ENCODE measurements at regions of chr12 and their contacts with region 1.

Region 1: GRCh38 chr12:56759263-56759908 is 3.7 kb upstream of the HSD17B6 start:
- DNase-seq: no peak
- H3K4me3 ChIP-seq: no peak overlapping the region
- H3K27ac ChIP-seq: no peak overlapping the region
- H3K4me1 ChIP-seq: no peaks in the 10 kb centered on the region
- H3K27me3 ChIP-seq: no peaks in the 10 kb centered on the region
- CTCF ChIP-seq: no peak

Region 2: GRCh38 chr12:56158029-56158925 is 601.1 kb before region 1 on chr12 and contains the start of gene MYL6:
- intact Hi-C with region 1: no loop called
- DNase-seq: peak; percentile 98
- H3K4me3 ChIP-seq: peak within 1 kb of the TSS; percentile 76
- H3K27ac ChIP-seq: peak within 1 kb of the TSS; percentile 96
- H3K4me1 ChIP-seq: peaks cover 8% of the 10 kb centered on the region
- H3K27me3 ChIP-seq: no peaks in the 10 kb centered on the region
- CTCF ChIP-seq: no peak
- total RNA-seq, gene MYL6: 1,641 to 1,922 TPM

Region 3: DNA sequence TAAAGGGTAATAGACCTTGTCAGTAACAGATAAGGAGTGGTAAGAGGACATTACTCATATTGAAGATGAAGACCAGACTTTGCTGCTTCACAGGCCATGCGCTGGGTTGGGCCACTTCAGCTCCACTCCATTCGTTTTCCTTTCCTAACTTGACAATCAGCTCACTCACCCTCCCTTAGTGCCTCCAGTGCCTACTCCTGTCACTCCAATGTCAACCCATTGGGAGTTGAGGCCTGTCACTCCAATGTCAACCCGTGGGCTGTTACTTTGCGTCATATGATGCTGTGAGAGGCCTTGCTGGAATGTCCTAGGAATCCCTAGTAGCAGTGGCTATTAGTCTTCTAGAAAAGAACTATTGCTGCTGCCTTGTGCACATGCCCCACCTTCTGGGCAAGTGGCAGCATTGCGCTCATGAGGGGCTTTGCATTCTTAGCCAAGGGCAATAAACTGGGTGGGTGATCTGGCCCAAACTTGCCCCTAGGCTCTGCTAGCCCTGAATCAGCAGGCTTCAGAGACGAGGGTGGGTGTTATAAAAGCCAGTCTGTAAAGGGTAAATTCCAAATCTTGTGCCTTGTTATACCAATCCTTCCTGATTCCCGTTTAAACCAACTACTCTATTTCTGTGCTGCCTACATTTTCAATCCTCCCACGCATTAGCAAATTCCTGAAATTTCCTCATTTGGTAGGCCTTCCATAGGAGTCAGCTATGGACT is 165.3 kb before region 1 on chr12:
- intact Hi-C with region 1: no loop called
- DNase-seq: peak; percentile 37
- H3K4me3 ChIP-seq: no peak overlapping the region
- H3K27ac ChIP-seq: no peak overlapping the region
- H3K4me1 ChIP-seq: peaks cover 3% of the 10 kb centered on the region
- H3K27me3 ChIP-seq: no peaks in the 10 kb centered on the region
- CTCF ChIP-seq: peak; percentile 75

Region 4: DNA sequence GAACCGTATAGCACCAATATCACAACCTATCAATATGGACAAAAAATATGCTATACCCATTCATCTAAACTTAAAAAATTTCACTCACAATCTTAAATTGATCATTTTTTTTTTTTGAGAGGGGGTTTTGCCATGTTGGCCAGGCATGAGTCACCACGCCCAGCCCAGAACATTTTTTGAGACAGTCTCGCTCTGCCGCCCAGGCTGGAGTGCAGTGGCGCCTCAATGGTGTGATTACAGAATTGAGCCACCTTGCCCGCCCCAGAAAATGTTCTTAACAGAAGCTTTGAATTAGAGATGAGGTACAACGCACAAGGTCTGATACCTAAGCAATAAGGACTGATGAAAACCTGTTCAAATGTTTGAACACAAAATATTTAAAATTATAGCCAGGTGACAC is 97.8 kb before region 1 on chr12:
- intact Hi-C with region 1: no loop called
- DNase-seq: no peak
- H3K4me3 ChIP-seq: no peak overlapping the region
- H3K27ac ChIP-seq: no peak overlapping the region
- H3K4me1 ChIP-seq: no peaks in the 10 kb centered on the region
- H3K27me3 ChIP-seq: no peaks in the 10 kb centered on the region
- CTCF ChIP-seq: no peak

Region 5: DNA sequence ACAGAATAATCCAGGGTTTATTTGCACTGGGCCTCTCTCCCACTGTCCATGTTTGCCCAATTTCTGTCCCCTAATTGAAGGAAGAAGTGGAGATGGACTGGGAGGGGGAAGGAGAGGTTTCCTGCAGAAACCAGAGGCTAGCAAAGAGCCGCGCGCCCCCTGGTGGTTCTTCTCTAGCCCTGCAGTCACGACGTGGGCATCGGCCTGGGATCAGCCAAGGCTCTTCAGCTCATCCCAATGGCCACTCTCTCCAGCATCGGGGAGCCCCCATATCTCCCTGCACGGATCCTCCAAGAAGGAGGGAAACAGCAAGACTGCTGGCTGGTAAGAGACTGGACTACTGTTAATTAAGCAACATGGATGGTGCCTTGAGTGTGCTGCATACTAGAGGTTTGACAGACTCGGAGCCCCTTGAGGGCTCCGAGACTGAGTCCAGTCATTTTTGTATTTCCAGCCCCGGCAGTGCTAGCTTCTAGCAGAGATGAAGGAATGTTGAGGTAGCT is 228.2 kb after region 1 on chr12:
- intact Hi-C with region 1: loop called (anchors 2 kb)
- DNase-seq: peak; percentile 82
- H3K4me3 ChIP-seq: no peak overlapping the region
- H3K27ac ChIP-seq: no peak overlapping the region
- H3K4me1 ChIP-seq: no peaks in the 10 kb centered on the region
- H3K27me3 ChIP-seq: no peaks in the 10 kb centered on the region
- CTCF ChIP-seq: peak; percentile 90

Region 6: DNA sequence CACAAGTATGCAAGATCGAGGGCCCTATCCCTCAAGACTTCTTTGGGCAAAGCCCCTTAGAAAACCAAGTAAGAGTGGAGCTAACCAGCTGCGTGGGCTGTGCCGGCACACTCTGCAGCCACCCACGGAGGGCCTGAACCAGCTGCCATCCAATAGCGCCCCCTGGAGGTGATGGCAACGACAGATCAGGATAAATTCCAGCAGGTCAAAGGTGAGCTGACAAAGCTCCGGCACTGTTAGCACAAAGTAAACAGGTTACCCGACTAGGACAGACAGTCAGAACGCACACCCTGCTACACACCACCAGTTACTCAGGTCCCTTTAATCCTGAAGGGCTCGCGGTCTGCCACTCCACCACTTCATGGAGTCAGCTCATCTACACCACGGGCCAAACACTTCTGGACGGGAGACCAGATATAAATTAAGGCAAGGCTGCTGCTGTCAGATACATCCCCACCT is 242.1 kb after region 1 on chr12:
- intact Hi-C with region 1: loop called (anchors 5 kb)
- DNase-seq: peak; percentile 83
- H3K4me3 ChIP-seq: no peak overlapping the region
- H3K27ac ChIP-seq: no peak overlapping the region
- H3K4me1 ChIP-seq: peaks cover 15% of the 10 kb centered on the region
- H3K27me3 ChIP-seq: no peaks in the 10 kb centered on the region
- CTCF ChIP-seq: peak; percentile 79